Caco-2 (cell line): ENCODE measurements at regions of chr14 and their contacts with region 1.

Region 1: DNA sequence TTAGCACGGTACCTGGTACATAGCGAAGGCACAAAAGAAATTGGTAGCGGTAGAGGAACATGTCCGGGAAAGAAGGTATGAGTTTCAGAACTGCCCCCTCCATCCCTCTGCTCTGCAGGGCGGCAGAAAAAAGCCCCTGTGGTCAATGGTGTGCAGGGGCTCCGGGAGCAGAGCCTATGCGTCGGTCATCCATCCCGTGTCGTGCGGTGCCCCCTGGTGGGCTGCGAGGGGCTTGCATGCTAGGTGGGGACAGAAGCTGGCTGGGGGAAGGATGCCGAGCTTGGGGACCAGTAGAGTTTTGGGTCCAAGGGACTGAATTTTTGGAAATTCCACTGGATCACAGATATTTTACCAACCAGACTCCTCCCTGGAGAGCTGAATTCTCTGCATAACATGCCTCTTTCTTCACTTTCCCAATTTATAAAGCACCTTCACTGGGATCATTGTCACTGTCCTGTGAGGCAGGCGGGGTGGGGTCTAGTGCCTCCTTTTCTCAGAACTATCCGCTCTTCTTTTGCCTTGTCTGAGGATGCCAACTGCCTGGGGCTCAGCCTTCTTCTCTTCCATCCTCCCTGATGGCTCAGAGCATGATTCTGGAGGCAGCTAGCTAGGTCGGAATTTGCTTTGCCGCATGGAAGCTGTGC is 148.7 kb downstream of the SMOC1 start:
- DNase-seq: peak; percentile 76 to 90
- H3K4me3 ChIP-seq: no peak overlapping the region
- H3K4me3 Mint-ChIP-seq: no peak overlapping the region
- H3K27ac Mint-ChIP-seq: no peak overlapping the region
- H3K4me1 ChIP-seq: peaks cover 11% of the 10 kb centered on the region
- H3K4me1 Mint-ChIP-seq: peaks cover 10% of the 10 kb centered on the region
- H3K27me3 ChIP-seq: no peaks in the 10 kb centered on the region
- H3K27me3 Mint-ChIP-seq: no peaks in the 10 kb centered on the region
- CTCF ChIP-seq: peak; percentile 95 to 96

Region 2: DNA sequence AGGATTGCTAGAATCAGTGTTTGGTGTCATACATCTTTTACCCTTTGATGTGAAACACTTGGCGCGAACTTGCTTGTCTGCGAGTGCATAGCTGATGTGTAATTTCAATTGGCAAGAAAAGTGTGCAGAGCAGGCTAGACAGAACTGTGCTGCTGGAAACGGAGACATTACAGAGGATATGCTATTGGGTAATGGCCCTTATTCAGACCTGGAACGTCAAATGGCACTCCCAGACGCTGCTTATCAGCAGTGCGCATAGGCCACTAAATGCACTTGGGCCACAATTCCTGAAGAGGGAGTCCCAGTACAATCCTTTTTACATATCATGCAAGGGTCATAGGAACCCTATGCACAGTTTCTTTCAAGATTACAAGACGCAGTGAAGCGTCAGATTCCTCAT is 215.2 kb before region 1 on chr14:
- CTCF ChIA-PET with region 1: interaction called, 39 read pairs
- POLR2A ChIA-PET with region 1: interaction called, 3 read pairs
- intact Hi-C with region 1: no loop called
- DNase-seq: peak; percentile 65 to 73
- H3K4me3 ChIP-seq: no peak overlapping the region
- H3K4me3 Mint-ChIP-seq: no peak overlapping the region
- H3K27ac Mint-ChIP-seq: no peak overlapping the region
- H3K4me1 ChIP-seq: peaks cover 70% of the 10 kb centered on the region
- H3K4me1 Mint-ChIP-seq: peaks cover 26% of the 10 kb centered on the region
- H3K27me3 ChIP-seq: no peaks in the 10 kb centered on the region
- H3K27me3 Mint-ChIP-seq: no peaks in the 10 kb centered on the region
- CTCF ChIP-seq: peak; percentile 24 to 38

Region 3: DNA sequence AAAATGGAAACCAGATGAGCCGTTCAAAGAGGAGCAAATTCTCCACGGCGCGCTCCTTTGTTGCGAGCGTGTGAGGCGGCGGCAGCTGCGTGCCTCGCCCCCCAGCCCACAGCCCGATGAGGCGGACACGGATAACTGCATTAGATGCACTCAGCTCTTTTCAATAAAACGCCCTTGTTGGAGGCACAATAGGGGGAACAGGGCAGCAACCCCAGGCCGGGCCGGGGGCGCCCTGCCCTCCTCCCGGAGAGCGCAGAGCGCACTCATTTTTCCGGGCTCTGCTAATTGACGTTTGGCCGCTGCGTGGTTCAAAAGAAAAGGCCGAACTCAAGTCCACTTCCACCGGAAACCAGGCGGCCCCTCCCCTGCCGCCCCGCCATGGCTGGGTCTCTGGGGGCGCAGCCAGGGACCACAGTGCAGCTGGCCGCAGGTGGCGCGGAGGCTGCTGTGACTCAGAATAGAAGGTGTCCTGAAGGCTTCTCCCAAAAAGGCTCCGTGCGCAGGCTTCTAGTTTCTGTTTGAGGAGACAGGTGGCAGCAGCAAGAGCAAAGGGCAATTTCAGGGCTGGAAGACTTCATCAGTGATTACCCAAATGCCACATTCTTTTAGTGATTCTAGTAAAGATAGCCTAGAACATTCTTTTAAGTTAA is 177.7 kb before region 1 on chr14:
- CTCF ChIA-PET with region 1: interaction called, 13 read pairs
- POLR2A ChIA-PET with region 1: no interaction called
- intact Hi-C with region 1: no loop called
- DNase-seq: peak; percentile 79 to 86
- H3K4me3 ChIP-seq: peak overlapping the region; percentile 6
- H3K4me3 Mint-ChIP-seq: peak overlapping the region; percentile 61
- H3K27ac Mint-ChIP-seq: no peak overlapping the region
- H3K4me1 ChIP-seq: peaks cover 19% of the 10 kb centered on the region
- H3K4me1 Mint-ChIP-seq: peaks cover 9% of the 10 kb centered on the region
- H3K27me3 ChIP-seq: no peaks in the 10 kb centered on the region
- H3K27me3 Mint-ChIP-seq: no peaks in the 10 kb centered on the region
- CTCF ChIP-seq: peak in 1 of 2 experiments; percentile 24

Region 4: GRCh38 chr14:69877492-69877891 is 150.4 kb before region 1 on chr14:
- CTCF ChIA-PET with region 1: interaction called, 6 read pairs
- POLR2A ChIA-PET with region 1: no interaction called
- intact Hi-C with region 1: loop called (anchors 1 kb)
- DNase-seq: no peak
- H3K4me3 ChIP-seq: no peak overlapping the region
- H3K4me3 Mint-ChIP-seq: no peak overlapping the region
- H3K27ac Mint-ChIP-seq: no peak overlapping the region
- H3K4me1 ChIP-seq: no peaks in the 10 kb centered on the region
- H3K4me1 Mint-ChIP-seq: no peaks in the 10 kb centered on the region
- H3K27me3 ChIP-seq: no peaks in the 10 kb centered on the region
- H3K27me3 Mint-ChIP-seq: no peaks in the 10 kb centered on the region
- CTCF ChIP-seq: peak; percentile 23 to 33

Region 5: DNA sequence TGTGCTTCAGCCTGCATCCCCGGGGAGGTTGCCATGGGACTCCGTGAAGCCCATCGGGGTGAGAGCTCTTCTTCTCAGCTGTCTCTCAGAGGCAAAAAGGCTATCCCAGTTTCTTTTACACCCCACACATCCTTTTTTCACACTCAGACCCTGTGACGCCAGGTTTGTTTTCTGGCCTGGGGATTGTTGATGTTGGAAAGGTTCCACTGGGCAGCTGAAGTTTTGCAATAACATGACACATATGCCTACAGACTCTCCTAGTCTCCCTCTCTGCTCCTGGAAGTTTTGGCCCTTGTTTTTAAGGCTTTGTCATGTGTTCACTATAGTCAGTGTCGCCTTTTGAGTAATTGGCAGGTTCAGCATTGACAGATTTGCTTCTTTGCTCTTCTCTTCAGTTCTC is 30.1 kb before region 1 on chr14:
- CTCF ChIA-PET with region 1: no interaction called
- POLR2A ChIA-PET with region 1: no interaction called
- intact Hi-C with region 1: no loop called
- DNase-seq: no peak
- H3K4me3 ChIP-seq: no peak overlapping the region
- H3K4me3 Mint-ChIP-seq: no peak overlapping the region
- H3K27ac Mint-ChIP-seq: no peak overlapping the region
- H3K4me1 ChIP-seq: 0 out of 2 replicates have a peak, but pooled peaks cover 2% of the 10 kb centered on the region
- H3K4me1 Mint-ChIP-seq: peaks cover 4% of the 10 kb centered on the region
- H3K27me3 ChIP-seq: no peaks in the 10 kb centered on the region
- H3K27me3 Mint-ChIP-seq: no peaks in the 10 kb centered on the region
- CTCF ChIP-seq: no peak